ENCODE measurements at regions of chr22 and their contacts with region 1.

Region 1: GRCh38 chr22:38569972-38570778 is at the start of gene DMC1:
- DNase-seq: peak; percentile 100
- ATAC-seq: peak; percentile 94
- H3K4me3 Mint-ChIP-seq: peak within 1 kb of the TSS; percentile 95
- H3K27ac Mint-ChIP-seq: peak within 1 kb of the TSS; percentile 97
- H3K4me1 Mint-ChIP-seq: peaks cover 16% of the 10 kb centered on the region
- H3K27me3 Mint-ChIP-seq: no peaks in the 10 kb centered on the region
- total RNA-seq, gene DMC1: 16.3 to 18.9 TPM

Region 2: DNA sequence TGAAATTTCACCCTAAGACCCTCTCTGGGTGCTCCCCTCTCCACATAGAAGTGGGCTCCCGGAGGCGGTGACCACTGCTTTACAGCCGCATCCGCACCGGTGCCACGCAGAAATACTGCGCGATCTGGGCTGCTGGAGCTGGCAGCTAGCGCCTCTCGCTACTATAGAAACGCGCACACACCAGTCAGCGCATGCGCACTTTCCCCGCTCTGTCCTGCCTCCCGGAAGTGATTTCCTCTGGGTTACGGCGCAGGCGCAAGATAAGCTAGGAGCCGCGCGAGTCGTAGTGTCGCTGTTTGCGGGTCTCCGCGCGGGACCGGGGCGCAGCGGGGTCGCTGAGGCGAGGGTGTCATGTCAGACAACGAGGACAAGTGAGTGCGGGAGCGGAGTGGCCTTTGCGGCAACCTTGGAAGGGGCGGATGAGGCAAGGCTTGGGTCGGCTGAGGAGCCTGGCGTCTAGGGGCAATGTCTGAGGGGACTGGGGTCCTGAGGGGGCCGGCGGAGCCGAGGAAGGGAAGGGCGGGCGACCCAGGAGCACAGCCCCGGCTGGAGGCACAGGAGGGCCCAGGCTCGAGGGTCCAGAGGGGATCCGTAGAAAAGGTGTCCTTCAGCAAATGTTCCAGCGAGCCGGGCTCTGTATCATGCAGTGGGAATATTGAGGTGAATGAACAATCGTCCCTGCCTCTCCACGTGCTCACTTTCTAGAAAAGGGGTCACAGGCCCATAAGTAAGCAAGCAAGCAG is 616.6 kb before region 1 on chr22 and contains the starts of genes C22orf23 and POLR2F:
- CTCF ChIA-PET with region 1: no interaction called
- POLR2A ChIA-PET with region 1: no interaction called
- intact Hi-C with region 1: loop called in 1 of 2 experiments (anchors 1 kb)
- DNase-seq: peak; percentile 98
- ATAC-seq: peak; percentile 98
- H3K4me3 Mint-ChIP-seq: peak within 1 kb of the TSS; percentile 86
- H3K27ac Mint-ChIP-seq: peak within 1 kb of the TSS; percentile 91
- H3K4me1 Mint-ChIP-seq: peaks cover 26% of the 10 kb centered on the region
- H3K27me3 Mint-ChIP-seq: peaks cover 11% of the 10 kb centered on the region
- total RNA-seq, gene C22orf23: 0.16 TPM in 1 of 2 experiments, not detected in the other
- total RNA-seq, gene POLR2F: 70.5 to 77.8 TPM

Region 3: DNA sequence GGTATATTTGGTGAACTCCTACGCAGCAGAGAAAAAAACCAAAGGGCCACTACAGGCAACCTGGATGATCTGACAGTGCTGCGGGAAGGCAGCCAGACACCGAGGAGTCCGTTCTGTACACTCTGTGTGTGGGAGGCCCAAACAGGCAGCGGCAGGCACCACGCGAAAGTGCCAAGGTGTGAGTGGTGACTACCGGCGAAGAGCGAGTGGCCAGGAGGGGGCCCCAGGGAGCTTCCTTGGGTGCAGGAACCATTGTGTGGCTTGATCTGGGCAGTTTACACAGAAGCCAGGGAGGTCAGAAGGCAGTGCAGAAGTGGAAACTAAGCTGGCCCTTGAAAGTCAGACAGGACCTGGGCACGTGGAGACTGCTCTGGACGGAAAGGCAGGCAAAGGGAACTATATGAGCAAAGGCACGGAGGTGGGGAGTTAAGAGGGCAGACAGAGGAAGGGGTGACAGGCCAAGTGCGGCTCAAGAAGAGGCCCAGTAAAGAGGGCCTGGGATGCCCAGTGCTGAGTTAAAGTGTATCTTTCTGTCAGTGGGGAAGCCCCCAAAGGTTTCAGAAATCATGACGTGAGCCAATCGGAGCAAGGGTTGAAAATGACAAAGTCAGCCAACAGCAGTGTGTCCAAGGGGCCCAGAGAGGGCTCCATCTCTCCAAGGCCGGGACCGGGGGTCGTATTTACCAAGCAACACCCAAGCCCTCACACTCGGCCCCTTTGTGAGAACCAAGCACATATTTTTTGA is 308.0 kb before region 1 on chr22:
- CTCF ChIA-PET with region 1: interaction called, 3 read pairs
- POLR2A ChIA-PET with region 1: no interaction called
- intact Hi-C with region 1: loop called in 1 of 2 experiments (anchors 5 kb)
- DNase-seq: peak; percentile 75
- ATAC-seq: peak; percentile 77
- H3K4me3 Mint-ChIP-seq: no peak overlapping the region
- H3K27ac Mint-ChIP-seq: peak overlapping the region; percentile 67
- H3K4me1 Mint-ChIP-seq: peaks cover 36% of the 10 kb centered on the region
- H3K27me3 Mint-ChIP-seq: no peaks in the 10 kb centered on the region

Region 4: GRCh38 chr22:38461414-38462081 is 108.6 kb before region 1 on chr22:
- CTCF ChIA-PET with region 1: interaction called, 4 read pairs
- POLR2A ChIA-PET with region 1: interaction called, 7 read pairs
- intact Hi-C with region 1: loop called in 1 of 2 experiments (anchors 1 kb)
- DNase-seq: peak; percentile 88
- ATAC-seq: peak; percentile 84
- H3K4me3 Mint-ChIP-seq: no peak overlapping the region
- H3K27ac Mint-ChIP-seq: no peak overlapping the region
- H3K4me1 Mint-ChIP-seq: peaks cover 11% of the 10 kb centered on the region
- H3K27me3 Mint-ChIP-seq: peaks cover 72% of the 10 kb centered on the region

Region 5: GRCh38 chr22:38705235-38706100 is 135.3 kb after region 1 on chr22 and contains the start of gene GTPBP1:
- CTCF ChIA-PET with region 1: no interaction called
- POLR2A ChIA-PET with region 1: no interaction called
- intact Hi-C with region 1: loop called in 1 of 2 experiments (anchors 1 kb)
- DNase-seq: peak; percentile 98
- ATAC-seq: peak; percentile 89
- H3K4me3 Mint-ChIP-seq: peak within 1 kb of the TSS; percentile 93
- H3K27ac Mint-ChIP-seq: peak within 1 kb of the TSS; percentile 97
- H3K4me1 Mint-ChIP-seq: peaks cover 53% of the 10 kb centered on the region
- H3K27me3 Mint-ChIP-seq: no peaks in the 10 kb centered on the region
- total RNA-seq, gene GTPBP1: 88.6 to 92.8 TPM

Measured in activated CD4-positive, alpha-beta T cell treated with anti-CD3 and anti-CD28 coated beads for 36 hours (primary cell).